Heart right ventricle (tissue), 16 donors: ENCODE measurements at regions of chr6 and their contacts with region 1.

Region 1: DNA sequence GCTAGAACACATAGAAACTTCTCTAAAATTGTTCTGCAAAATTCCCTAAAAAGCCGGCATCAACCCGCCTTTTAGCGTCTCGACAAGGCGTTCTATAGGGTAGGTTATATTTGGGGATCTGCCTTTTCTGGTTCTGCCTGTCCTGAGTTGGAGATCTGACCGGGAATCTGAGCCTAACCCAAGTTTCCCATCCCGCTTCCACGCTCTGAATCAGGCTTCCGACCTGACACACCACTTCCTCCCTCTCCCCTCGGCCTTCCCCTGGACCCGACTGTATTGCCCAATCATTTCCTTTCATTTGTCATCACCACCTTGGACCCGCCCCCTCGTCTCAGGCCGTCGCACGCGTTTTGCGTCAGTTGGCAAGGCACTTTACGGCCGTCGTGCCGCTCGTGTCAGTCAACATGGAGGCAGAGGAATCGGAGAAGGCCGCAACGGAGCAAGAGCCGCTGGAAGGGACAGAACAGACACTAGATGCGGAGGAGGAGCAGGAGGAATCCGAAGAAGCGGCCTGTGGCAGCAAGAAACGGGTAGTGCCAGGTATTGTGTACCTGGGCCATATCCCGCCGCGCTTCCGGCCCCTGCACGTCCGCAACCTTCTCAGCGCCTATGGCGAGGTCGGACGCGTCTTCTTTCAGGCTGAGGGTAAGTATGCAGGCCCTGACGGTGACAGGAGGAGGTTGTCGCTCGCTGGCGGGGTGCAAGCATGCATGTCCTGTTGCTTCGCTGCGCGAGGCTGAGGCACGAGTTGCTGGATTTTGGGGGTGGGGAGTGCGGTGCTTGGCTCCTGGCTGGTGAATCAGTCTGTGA is at the start of gene ABT1:
- DNase-seq: peak; percentile 97 to 99
- ATAC-seq: peak; percentile 98 to 99 (median 99)
- H3K4me3 ChIP-seq: peak within 1 kb of the TSS; percentile 72 to 96 (median 87)
- H3K27ac ChIP-seq: peak within 1 kb of the TSS; percentile 59 to 95 (median 88)
- H3K4me1 ChIP-seq: peaks cover 0 to 39% (median 18%) of the 10 kb centered on the region in 9 donors
- H3K27me3 ChIP-seq: peaks cover 0 to 33% (median 24%) of the 10 kb centered on the region in 7 donors
- CTCF ChIP-seq: no peak
- total RNA-seq, gene ABT1: 5.8 to 10.2 (median 7.4) TPM

Region 2: GRCh38 chr6:26025894-26026832 is 570.6 kb before region 1 on chr6:
- intact Hi-C with region 1: no loop called
- DNase-seq: peak; percentile 90 to 96
- ATAC-seq: peak; percentile 65 to 83 (median 74)
- H3K4me3 ChIP-seq: peak overlapping the region; percentile 51 to 79 (median 68)
- H3K27ac ChIP-seq: peak overlapping the region; percentile 86 to 96 (median 91)
- H3K4me1 ChIP-seq: peaks cover 0 to 52% (median 10%) of the 10 kb centered on the region in 9 donors
- H3K27me3 ChIP-seq: no peaks in the 10 kb centered on the region
- CTCF ChIP-seq: peak; percentile 48 to 93 (median 83)

Region 3: GRCh38 chr6:26175428-26176181 is 421.2 kb before region 1 on chr6:
- intact Hi-C with region 1: loop called in 3 of 10 experiments (anchors 2 to 10 kb)
- DNase-seq: peak in 1 of 2 donors; percentile 48
- ATAC-seq: no peak
- H3K4me3 ChIP-seq: no peak overlapping the region
- H3K27ac ChIP-seq: no peak overlapping the region
- H3K4me1 ChIP-seq: peaks cover 0 to 31% (median 9%) of the 10 kb centered on the region in 9 donors
- H3K27me3 ChIP-seq: no peaks in the 10 kb centered on the region
- CTCF ChIP-seq: peak; percentile 17 to 77 (median 63)

Region 4: GRCh38 chr6:26561533-26562466 is 35.0 kb before region 1 on chr6:
- intact Hi-C with region 1: no loop called
- DNase-seq: no peak
- ATAC-seq: no peak
- H3K4me3 ChIP-seq: no peak overlapping the region
- H3K27ac ChIP-seq: no peak overlapping the region
- H3K4me1 ChIP-seq: no peaks in the 10 kb centered on the region
- H3K27me3 ChIP-seq: no peaks in the 10 kb centered on the region
- CTCF ChIP-seq: no peak

Region 5: DNA sequence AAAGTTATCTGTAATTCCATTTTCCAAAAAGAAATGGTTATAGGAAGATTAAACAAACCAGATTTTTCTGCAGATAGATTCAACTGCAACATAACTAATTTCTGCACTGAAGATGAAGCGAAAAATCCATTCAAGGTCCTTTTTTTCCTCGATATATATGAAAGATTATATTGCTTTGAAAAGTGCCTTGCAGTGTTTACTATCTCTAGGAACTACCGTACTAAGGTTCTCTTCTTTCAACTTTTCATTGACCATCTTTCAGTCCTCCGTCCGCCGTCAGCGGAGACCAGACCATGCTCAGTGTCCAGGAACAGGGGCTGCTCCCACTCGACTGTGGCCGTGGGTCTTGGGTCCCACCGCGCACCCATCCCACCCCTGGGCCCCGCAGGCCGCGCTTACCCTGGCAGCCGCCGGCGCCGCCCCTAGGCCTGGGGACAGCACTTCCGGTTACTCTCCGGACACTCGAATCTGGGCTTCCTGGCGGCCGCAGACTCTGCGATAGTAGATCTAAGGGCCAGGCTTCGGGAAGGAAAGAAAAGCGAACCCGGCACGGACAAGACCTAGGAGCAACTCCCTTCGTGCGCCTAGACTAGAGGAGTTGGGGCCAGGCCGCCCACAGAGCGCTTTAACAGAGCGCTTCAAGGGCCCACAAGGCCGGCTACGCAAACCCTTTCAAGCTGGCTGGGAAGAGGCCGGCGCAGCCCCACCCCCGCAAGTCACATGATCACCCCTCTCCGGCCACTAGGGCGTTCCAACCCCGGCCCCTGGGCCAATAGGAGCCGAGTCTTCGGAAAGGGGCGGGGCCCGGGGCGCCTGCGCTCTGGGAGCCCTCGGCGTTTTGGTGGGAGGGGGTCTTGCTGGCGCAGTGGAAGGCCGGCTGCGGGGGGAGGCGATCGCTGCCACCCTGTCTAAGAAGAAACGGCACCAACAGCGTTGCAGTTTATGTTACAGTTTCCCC is 62.5 kb after region 1 on chr6 and contains the start of gene ZNF322:
- intact Hi-C with region 1: loop called in 1 of 10 experiments (anchors 2 kb)
- DNase-seq: peak; percentile 94 to 95
- ATAC-seq: peak; percentile 100
- H3K4me3 ChIP-seq: peak within 1 kb of the TSS; percentile 53 to 92 (median 68)
- H3K27ac ChIP-seq: peak within 1 kb of the TSS; percentile 37 to 91 (median 87)
- H3K4me1 ChIP-seq: peaks cover 6 to 33% (median 24%) of the 10 kb centered on the region in 9 donors
- H3K27me3 ChIP-seq: peaks cover 0 to 27% (median 11%) of the 10 kb centered on the region in 7 donors
- CTCF ChIP-seq: peak in 2 of 9 donors; percentile 8 to 10
- total RNA-seq, gene ZNF322: 9.5 to 14.5 (median 13.0) TPM